ENCODE measurements at regions of chr14 and their contacts with region 1.

Region 1: DNA sequence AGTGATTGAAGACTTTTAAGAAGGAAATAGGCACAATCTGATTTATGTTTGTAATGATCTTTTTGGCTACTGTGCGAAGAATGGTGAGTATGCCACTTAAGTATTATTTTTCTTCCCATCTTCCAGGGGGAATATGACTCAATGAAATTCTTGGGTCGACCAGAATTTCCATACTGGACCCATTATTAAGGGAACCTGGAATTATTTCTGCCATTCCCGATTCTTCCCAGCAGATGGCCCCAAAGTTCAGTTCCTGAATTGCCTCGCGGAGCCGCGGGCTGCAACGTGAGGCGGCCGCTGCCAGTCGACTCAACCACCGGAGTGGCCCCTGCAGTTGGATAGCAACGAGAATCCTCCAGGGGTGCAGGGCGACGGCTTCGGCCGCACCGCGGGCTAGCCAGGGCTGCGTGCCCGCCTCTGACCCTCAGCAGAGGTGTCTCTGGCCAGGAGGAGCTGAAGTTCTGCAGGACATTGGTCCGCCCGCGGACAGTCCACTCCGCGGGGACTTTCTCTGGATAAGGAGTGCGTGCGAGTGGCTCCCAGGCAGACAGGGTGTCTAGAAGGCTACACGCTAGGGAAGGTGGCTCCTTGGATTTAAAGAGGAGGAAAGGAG is 628 bp upstream of the TSHR start:
- DNase-seq: peak; percentile 63
- H3K4me3 Mint-ChIP-seq: peak overlapping the region; percentile 84
- H3K27ac Mint-ChIP-seq: peak overlapping the region; percentile 1
- H3K4me1 Mint-ChIP-seq: peaks cover 49% of the 10 kb centered on the region
- H3K27me3 Mint-ChIP-seq: peaks cover 46% of the 10 kb centered on the region

Region 2: DNA sequence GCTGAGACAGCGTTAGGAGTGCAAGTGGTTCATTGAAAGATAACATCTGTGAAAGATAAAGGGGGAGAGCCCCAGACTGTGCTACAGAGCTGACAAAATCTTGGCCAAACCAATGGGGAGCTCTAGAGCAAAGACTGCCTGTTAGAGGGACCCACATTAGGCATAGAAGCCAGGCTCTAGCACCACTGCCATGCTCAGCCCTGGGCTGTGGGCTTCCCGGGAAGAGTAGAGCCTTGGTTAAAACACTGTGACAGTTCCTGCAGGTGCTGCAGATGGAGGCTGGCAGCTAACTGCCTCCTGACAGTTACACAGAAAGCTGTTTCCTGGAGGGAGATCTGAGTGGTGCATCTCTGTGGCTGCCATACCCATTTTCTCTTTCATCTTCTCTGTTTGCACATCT is 23.6 kb after region 1 on chr14:
- intact Hi-C with region 1: loop called (anchors 1 kb)
- DNase-seq: peak; percentile 24
- H3K4me3 Mint-ChIP-seq: no peak overlapping the region
- H3K27ac Mint-ChIP-seq: no peak overlapping the region
- H3K4me1 Mint-ChIP-seq: peaks cover 53% of the 10 kb centered on the region
- H3K27me3 Mint-ChIP-seq: peaks cover 17% of the 10 kb centered on the region

Region 3: DNA sequence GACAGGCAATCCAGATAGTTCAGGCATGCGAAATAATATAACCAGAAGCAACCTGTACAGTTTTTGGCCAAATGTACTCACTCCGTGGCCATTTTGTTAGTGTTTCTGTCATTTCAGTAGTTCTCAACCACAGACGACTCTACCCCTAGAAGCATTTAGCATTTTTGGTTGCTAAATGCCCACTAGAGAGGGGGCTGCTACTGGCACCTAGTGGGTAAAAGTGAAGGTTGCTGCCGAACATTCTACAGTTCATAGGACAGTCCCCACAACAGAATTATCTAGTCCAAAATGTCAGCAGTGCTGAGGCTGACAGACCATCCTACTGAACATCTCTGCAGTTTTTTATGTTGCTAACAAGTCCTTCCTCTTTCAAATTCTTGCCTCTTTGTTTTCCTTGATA is 108.0 kb after region 1 on chr14:
- intact Hi-C with region 1: loop called (anchors 10 kb)
- DNase-seq: no peak
- H3K4me3 Mint-ChIP-seq: no peak overlapping the region
- H3K27ac Mint-ChIP-seq: no peak overlapping the region
- H3K4me1 Mint-ChIP-seq: no peaks in the 10 kb centered on the region
- H3K27me3 Mint-ChIP-seq: peaks cover 7% of the 10 kb centered on the region

Region 4: DNA sequence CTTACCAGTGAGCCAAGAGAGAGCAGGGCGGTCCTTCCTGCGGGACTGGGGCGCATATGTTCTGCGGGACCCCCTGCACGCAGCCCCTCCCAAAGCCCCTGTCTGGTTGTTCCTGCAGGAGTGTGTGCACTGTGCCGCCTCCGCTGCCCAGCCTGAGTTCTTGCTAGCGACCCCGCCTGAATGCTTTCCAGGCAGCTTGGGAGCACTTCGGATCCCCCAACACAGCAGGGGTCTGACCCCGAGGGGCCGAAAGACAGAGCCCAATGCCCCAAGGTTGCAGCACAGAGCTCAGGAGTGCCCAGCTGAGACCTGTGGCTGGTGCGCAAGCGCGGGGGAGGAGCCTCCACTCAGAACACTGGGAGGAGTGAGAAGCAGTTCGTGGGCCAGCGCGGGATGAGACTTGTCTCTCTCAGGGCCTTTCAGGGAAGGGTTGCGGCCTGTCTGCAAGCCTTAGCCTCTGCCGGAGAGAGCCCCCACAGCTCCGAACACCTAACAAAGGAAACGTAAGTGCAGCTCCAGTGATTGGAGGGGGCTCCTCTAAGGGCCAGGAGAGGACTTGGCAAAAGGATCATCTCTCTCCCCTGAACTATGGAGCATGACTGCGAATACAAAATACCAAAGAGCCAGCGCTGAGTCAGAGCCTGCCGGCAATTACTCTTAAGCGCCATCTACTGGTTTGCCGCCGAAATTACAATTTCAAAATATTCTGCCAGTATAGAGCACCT is 215.5 kb after region 1 on chr14:
- intact Hi-C with region 1: loop called (anchors 1 kb)
- DNase-seq: peak; percentile 83
- H3K4me3 Mint-ChIP-seq: peak overlapping the region; percentile 86
- H3K27ac Mint-ChIP-seq: peak overlapping the region; percentile 97
- H3K4me1 Mint-ChIP-seq: peaks cover 39% of the 10 kb centered on the region
- H3K27me3 Mint-ChIP-seq: no peaks in the 10 kb centered on the region

Region 5: DNA sequence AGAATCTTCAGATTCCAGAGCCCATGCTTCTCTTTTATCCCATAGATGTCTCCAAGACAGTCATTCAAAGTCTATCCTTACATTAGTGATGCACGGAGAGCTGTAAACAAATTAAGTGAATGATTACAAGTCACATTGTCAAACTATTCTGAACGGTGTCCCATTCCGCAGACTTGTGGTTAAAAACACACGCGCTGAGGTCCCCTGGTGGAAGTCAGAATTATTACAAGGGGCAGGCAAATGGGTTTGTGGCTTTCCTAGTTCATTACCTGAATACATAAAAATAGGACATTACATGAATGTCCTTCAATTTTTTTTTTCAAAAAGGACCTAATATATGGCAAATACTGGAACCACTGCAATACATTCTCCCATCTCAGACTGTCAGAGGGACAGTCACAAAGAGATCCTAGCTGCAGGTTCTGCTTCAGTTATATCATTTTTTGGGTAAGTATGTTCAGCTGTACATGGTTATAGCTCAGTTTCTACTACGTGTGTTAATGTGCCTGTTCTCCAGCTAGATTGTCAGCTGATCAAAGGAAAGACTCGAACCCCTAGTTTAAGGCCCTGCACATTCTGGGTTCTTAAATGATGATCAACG is 498.5 kb after region 1 on chr14:
- intact Hi-C with region 1: loop called (anchors 10 kb)
- DNase-seq: peak; percentile 23
- H3K4me3 Mint-ChIP-seq: no peak overlapping the region
- H3K27ac Mint-ChIP-seq: no peak overlapping the region
- H3K4me1 Mint-ChIP-seq: peaks cover 3% of the 10 kb centered on the region
- H3K27me3 Mint-ChIP-seq: peaks cover 5% of the 10 kb centered on the region

Measured in activated T-helper 2 cell treated with anti-CD3 and anti-CD28 coated beads, Interferon-gamma antibody, Interleukin-2, Interleukin-4, amounts not matched to agents 10 μg/mL and 5 μg/mL and 100 μg/mL, durations not matched to agents 14 hours and 24 hours and 36 hours (primary cell).